Activated naive CD4-positive, alpha-beta T cell treated with anti-CD3 and anti-CD28 coated beads, Interleukin-2, amount 10 ng/mL, durations not matched to agents 7 days and 5 days (primary cell): ENCODE measurements at regions of chr17 and their contacts with region 1.

Region 1: GRCh38 chr17:40559954-40560591 is 5.2 kb downstream of the CCR7 start:
- DNase-seq: peak; percentile 90
- H3K4me3 Mint-ChIP-seq: peak overlapping the region; percentile 91
- H3K27ac Mint-ChIP-seq: peak overlapping the region; percentile 95
- H3K4me1 Mint-ChIP-seq: peaks cover 72% of the 10 kb centered on the region
- H3K27me3 Mint-ChIP-seq: no peaks in the 10 kb centered on the region

Region 2: DNA sequence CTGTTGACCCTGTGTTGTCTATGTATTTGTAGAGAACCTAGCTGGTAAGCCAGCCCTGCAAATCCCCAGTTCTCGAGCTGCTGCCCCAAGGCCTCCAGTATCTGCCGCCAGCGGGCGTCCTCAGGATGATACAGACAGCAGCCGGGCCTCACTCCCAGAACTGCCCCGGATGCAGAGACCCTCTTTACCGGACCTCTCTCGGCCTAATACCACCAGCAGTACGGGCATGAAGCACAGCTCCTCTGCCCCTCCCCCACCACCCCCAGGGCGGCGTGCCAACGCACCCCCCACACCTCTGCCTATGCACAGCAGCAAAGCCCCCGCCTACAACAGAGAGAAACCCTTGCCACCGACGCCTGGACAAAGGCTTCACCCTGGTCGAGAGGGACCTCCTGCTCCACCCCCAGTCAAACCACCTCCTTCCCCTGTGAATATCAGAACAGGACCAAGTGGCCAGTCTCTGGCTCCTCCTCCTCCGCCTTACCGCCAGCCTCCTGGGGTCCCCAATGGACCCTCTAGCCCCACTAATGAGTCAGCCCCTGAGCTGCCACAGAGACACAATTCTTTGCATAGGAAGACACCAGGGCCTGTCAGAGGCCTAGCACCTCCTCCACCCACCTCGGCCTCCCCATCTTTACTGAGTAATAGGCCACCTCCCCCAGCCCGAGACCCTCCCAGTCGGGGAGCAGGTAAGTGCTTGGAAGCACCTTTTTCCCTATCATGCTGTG is 295.5 kb before region 1 on chr17:
- CTCF ChIA-PET with region 1: no interaction called
- DNase-seq: no peak
- H3K4me3 Mint-ChIP-seq: no peak overlapping the region
- H3K27ac Mint-ChIP-seq: no peak overlapping the region
- H3K4me1 Mint-ChIP-seq: no peaks in the 10 kb centered on the region
- H3K27me3 Mint-ChIP-seq: no peaks in the 10 kb centered on the region

Region 3: DNA sequence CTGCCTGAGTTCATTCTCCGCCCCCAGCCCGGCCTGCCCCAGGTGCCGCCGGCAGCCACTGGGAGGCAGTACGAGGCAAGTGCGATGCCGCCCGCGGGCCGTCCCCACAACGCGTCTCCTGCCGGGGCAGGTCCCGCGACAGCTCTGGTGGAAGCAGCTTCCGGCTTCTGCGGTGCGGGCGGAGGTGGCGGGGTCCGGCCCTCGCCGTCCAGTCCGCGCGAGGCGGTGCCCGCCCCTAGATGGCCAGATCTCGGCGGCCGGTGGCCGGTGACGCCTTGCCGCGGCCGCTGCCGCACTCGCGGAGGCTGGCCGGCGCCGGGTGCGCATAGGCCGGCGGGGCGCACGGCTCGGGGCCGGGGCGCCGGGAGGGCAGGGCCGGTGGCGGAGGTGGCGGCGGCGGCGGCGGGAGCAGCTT is 197.4 kb before region 1 on chr17:
- CTCF ChIA-PET with region 1: interaction called, 10 read pairs
- DNase-seq: peak; percentile 93
- H3K4me3 Mint-ChIP-seq: peak overlapping the region; percentile 77
- H3K27ac Mint-ChIP-seq: peak overlapping the region; percentile 46
- H3K4me1 Mint-ChIP-seq: peaks cover 48% of the 10 kb centered on the region
- H3K27me3 Mint-ChIP-seq: peaks cover 36% of the 10 kb centered on the region

Region 4: GRCh38 chr17:40417609-40418427 is 142.3 kb before region 1 on chr17 and contains the start of gene TOP2A:
- CTCF ChIA-PET with region 1: interaction called, 10 read pairs
- DNase-seq: peak; percentile 97
- H3K4me3 Mint-ChIP-seq: peak within 1 kb of the TSS; percentile 90
- H3K27ac Mint-ChIP-seq: peak within 1 kb of the TSS; percentile 92
- H3K4me1 Mint-ChIP-seq: peaks cover 51% of the 10 kb centered on the region
- H3K27me3 Mint-ChIP-seq: peaks cover 3% of the 10 kb centered on the region

Region 5: DNA sequence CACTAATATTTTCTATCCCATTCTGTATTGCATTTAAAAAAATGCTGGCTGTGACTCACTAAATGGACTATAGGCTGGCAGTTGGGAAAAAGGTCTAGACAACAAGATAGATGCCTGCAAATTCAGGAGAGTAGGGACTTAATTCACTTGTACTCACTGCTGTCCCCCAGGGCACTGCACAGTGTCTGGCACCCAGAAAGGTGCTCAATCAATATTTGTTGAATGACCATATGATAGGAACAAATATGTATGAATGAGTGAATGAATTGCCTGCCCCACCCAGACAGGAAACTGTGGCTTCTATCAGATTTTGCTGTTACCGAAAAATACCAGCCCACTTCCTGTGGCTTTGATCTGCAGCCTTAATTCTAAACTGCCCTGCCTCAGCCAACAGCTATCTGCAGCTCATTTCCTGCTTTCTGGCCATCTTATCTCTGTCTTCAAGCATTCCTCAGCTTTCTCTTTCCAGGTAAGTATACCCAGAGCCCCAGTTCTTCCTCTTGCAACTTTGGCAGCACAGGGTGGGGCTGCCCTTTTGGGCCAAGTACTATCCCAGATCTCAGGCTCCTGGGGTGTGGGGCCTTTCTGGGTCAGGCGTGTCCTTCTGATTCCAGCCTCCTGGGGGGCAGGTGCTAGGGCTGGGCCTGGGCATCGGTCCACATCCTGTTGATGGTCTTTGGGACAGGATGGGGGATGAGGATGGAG is 43.3 kb before region 1 on chr17:
- CTCF ChIA-PET with region 1: no interaction called
- DNase-seq: peak; percentile 86
- H3K4me3 Mint-ChIP-seq: peak overlapping the region; percentile 81
- H3K27ac Mint-ChIP-seq: peak overlapping the region; percentile 94
- H3K4me1 Mint-ChIP-seq: peaks cover 84% of the 10 kb centered on the region
- H3K27me3 Mint-ChIP-seq: no peaks in the 10 kb centered on the region

Region 6: DNA sequence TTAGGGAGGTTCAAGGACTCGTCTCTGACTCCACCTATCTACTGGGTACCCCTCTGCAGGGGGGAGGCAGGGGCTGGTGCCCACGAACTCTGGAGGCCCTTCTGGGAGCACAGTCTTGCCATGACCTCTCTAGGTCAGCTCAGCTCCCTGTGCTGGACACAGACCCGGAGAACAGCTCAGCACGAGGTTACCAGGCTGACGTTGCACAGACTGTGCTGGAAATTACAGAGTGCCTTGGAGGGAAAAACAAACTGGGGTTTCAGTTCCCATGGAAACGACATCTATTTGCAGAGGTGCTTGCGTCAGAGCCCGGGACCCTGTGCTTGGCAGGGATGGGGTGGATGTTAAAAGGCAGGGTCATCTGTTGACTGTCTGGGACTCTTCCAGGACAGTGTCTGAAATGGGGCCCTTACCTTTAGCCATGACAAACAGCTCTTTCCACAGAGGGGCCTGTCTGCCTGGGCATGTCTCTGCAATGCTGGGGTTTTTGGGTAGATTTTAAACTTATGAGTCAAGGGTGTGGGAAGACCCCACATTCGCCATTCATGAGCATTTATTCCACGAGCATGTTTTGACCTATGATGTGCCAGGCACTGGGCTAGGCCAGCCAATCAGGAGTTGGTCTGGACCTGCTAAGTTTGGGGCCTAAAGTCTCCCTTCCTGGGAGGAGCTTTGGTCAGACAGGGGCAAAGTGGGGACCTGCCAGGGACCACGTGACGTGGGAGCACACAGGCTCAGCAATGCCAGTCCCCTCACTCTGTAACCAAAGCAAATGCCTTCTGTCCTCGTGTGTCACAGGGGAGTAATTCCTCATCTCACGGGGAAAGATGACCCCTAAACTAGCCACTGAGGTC is 17.3 kb before region 1 on chr17:
- CTCF ChIA-PET with region 1: interaction called, 271 read pairs
- DNase-seq: no peak
- H3K4me3 Mint-ChIP-seq: no peak overlapping the region
- H3K27ac Mint-ChIP-seq: peak overlapping the region; percentile 97
- H3K4me1 Mint-ChIP-seq: peaks cover 92% of the 10 kb centered on the region
- H3K27me3 Mint-ChIP-seq: peaks cover 9% of the 10 kb centered on the region

Region 7: DNA sequence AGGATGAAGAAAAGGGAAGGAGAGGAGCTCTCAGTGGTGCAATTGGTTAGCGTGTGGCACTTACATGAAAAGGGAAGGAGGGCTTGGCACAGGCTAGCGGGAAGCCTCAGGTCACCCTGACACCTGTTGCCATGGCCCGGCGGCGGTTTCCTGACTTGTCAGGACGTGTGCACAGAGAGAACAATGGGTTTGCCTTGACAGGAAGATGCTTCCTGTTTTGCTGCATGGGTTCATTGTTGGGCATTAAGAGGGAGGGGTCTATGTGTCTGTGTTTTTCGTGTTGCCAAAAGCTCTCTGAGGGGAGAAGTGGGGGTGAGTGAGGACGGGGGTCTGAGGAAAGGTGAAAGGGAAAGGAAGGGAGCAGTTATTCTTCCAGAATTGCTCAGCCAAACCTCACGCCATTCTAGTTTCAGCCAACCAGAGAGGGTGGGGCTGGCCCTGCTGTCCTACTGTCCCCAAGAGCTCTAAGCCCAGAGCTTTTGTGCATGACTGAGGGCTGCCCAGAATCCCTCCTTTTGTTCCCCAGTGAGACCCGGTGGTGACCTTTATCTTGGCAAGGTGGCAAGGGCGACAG is 22.3 kb after region 1 on chr17:
- CTCF ChIA-PET with region 1: interaction called, 36 read pairs
- DNase-seq: peak; percentile 88
- H3K4me3 Mint-ChIP-seq: peak overlapping the region; percentile 19
- H3K27ac Mint-ChIP-seq: peak overlapping the region; percentile 87
- H3K4me1 Mint-ChIP-seq: peaks cover 92% of the 10 kb centered on the region
- H3K27me3 Mint-ChIP-seq: no peaks in the 10 kb centered on the region

Region 8: DNA sequence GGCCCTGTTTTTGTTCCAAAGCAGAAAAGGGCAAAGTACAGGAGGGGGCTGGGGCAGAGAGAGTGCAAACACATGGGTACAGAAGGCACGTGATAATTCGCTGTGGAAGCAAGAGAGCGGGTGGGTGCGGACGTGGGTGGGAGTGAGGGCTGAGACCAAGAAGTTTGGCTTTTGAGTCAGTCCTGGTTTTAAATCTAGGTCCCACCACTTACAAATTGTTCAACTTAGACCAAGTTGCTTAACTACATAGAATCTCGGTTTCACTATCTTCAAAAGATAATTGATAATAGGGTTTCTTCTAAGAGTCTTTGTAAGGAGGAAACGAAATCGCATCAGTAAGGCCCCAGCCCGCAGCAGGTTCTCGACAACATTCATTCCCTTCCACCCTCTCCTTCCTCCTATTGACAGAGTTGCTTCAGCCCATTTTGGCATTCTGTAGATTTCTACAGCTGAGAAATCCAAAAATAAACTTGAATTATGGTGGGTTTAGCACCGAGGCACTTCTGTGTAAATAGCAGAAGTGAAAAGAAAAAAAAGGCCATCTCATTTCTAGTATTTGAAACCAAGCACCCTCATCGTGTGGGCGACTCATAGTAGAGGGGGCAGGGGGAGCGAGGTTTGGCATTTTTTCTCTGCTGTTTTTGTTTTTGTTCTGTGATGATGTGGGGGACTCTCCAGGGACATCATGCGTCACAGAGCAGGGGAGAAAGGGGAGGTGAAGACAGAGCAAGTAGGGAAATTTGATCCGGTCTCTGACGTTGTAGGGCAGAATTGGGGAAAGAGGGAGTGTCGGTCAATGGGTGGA is 38.8 kb after region 1 on chr17:
- CTCF ChIA-PET with region 1: interaction called, 25 read pairs
- DNase-seq: peak; percentile 75
- H3K4me3 Mint-ChIP-seq: peak overlapping the region; percentile 22
- H3K27ac Mint-ChIP-seq: peak overlapping the region; percentile 94
- H3K4me1 Mint-ChIP-seq: peaks cover 91% of the 10 kb centered on the region
- H3K27me3 Mint-ChIP-seq: no peaks in the 10 kb centered on the region

Region 9: DNA sequence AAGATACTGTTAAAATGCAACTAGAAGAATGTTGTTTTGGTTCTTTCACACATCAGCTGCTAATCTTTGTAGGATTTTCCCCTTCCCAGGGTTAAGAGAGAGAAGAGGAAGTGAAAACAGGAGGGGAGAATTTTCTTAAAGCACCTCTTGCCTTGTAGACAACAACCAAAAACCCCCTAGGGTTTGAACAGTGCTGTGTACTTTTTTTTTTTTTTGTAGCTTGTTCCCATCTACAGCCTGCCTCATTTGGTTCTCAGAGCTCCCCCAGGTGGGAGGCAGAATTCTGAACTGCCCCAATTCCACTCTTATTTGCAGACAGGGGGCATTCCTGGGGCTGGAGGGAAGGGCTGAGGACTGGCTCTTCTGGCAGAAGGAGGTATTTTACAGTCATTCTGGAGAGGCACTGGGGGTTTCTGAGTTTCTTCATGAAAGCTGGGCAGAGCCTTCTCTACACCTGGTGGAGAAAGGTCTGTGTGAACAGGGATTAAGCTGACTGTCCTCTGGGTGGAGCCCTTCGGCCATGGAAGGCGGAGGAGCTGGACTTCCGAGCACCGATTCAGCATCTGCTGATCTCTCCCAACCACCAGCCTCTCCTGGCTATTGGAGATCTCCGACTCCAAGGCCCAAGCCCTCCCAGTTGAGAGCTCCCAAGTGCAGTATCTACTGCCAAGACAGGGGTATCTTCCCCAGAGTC is 55.4 kb after region 1 on chr17:
- CTCF ChIA-PET with region 1: interaction called, 133 read pairs
- DNase-seq: peak; percentile 62
- H3K4me3 Mint-ChIP-seq: peak overlapping the region; percentile 24
- H3K27ac Mint-ChIP-seq: peak overlapping the region; percentile 77
- H3K4me1 Mint-ChIP-seq: peaks cover 86% of the 10 kb centered on the region
- H3K27me3 Mint-ChIP-seq: peaks cover 17% of the 10 kb centered on the region